Lower leg skin (tissue), 4 donors: ENCODE measurements at regions of chr1 and their contacts with region 1.

Region 1: DNA sequence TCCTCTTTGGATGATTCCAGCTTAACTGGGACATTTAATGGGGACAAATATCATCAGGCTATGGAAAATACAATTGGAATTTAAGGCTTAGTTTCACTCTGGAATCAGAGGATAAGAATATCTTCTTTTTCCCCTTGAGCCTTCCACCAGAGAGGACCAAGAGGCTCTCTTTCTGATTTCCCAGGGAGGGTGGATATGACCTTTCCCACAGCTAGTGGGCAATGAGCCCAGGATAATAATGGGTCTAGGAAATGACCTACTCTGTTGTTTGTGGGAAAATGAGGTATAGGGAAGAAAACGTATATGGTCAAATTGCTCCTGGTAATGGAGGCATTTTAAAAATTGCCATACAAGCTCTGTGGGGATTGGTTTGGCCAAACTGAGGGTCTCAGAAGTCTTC is 1.9 kb downstream of the OR6Y1 start:
- DNase-seq: no peak
- H3K4me3 ChIP-seq: no peak overlapping the region
- CTCF ChIP-seq: no peak
- POLR2A ChIP-seq: no peak

Region 2: GRCh38 chr1:158185770-158186705 is 366.3 kb before region 1 on chr1:
- intact Hi-C with region 1: no loop called
- DNase-seq: no peak
- H3K4me3 ChIP-seq: no peak overlapping the region
- CTCF ChIP-seq: no peak
- POLR2A ChIP-seq: no peak

Region 3: GRCh38 chr1:158506369-158506987 is 45.8 kb before region 1 on chr1:
- intact Hi-C with region 1: loop called (anchors 2 kb)
- DNase-seq: no peak
- H3K4me3 ChIP-seq: no peak overlapping the region
- CTCF ChIP-seq: no peak
- POLR2A ChIP-seq: no peak